Body of pancreas (tissue), 4 donors: ENCODE measurements at regions of chr1 and their contacts with region 1.

Region 1: DNA sequence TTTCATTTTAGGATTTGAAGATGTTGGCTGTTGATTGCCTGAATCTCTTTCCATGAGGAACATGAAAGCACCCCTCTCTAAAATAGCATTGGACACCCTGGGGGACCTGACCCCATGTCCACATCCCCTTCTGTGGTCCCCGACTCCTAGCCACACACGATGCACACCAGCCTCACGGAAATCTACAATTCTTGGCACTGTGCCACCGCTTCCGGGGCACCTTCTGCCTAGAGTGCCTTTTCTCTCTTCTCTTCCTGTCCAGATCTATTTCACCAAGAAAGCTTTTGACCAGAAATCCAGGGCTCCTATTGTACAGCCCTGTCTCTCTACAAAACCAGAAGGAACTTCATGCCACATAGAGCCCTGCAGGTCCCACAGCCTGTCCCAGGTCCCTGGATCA is 50.3 kb downstream of the MYSM1 start:
- DNase-seq: peak; percentile 34 to 63 (median 56)
- ATAC-seq: peak; percentile 42
- H3K4me3 ChIP-seq: no peak overlapping the region
- H3K27ac ChIP-seq: no peak overlapping the region
- H3K4me1 ChIP-seq: peaks cover 6% of the 10 kb centered on the region
- H3K27me3 ChIP-seq: no peaks in the 10 kb centered on the region
- CTCF ChIP-seq: no peak
- POLR2A ChIP-seq: no peak

Region 2: DNA sequence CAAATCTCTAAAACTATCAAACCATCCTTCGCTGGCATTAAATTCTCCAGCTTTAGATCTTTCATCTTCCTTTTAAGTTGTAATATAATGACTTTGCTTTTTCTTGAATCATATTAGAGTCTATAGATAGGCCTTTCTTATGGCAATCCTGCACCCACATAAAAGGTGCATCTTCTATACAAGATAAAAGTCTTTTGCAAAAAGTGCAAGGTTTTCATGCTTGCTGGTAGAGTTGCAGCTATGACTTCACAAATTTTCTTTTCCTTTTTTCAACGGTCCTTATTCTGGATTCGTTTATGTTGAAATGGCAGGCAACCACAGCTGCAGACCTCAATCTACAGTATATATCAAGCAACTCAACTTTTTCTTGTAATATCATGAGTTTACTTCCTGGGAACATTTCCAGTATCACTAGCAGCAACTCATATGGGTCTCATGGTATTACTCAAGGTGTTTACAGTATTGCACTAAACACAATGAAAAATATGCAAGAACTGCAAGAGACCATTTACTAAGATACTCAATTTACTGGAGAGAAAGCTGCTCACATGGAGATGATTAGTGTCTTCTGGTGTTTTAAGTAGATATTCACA is 125.1 kb before region 1 on chr1:
- intact Hi-C with region 1: loop called (anchors 5 kb)
- DNase-seq: no peak
- ATAC-seq: no peak
- H3K4me3 ChIP-seq: no peak overlapping the region
- H3K27ac ChIP-seq: no peak overlapping the region
- H3K4me1 ChIP-seq: peaks cover 9% of the 10 kb centered on the region
- H3K27me3 ChIP-seq: no peaks in the 10 kb centered on the region
- CTCF ChIP-seq: no peak
- POLR2A ChIP-seq: no peak

Region 3: GRCh38 chr1:58584082-58584895 is 65.3 kb before region 1 on chr1:
- intact Hi-C with region 1: no loop called
- DNase-seq: peak; percentile 48 to 72 (median 59)
- ATAC-seq: peak; percentile 88
- H3K4me3 ChIP-seq: no peak overlapping the region
- H3K27ac ChIP-seq: peak overlapping the region; percentile 50 to 70 (median 62)
- H3K4me1 ChIP-seq: peaks cover 24% of the 10 kb centered on the region
- H3K27me3 ChIP-seq: no peaks in the 10 kb centered on the region
- CTCF ChIP-seq: no peak
- POLR2A ChIP-seq: no peak

Region 4: GRCh38 chr1:58607391-58607790 is 42.2 kb before region 1 on chr1:
- intact Hi-C with region 1: no loop called
- DNase-seq: no peak
- ATAC-seq: no peak
- H3K4me3 ChIP-seq: no peak overlapping the region
- H3K27ac ChIP-seq: no peak overlapping the region
- H3K4me1 ChIP-seq: peaks cover 10% of the 10 kb centered on the region
- H3K27me3 ChIP-seq: no peaks in the 10 kb centered on the region
- CTCF ChIP-seq: no peak
- POLR2A ChIP-seq: no peak

Region 5: DNA sequence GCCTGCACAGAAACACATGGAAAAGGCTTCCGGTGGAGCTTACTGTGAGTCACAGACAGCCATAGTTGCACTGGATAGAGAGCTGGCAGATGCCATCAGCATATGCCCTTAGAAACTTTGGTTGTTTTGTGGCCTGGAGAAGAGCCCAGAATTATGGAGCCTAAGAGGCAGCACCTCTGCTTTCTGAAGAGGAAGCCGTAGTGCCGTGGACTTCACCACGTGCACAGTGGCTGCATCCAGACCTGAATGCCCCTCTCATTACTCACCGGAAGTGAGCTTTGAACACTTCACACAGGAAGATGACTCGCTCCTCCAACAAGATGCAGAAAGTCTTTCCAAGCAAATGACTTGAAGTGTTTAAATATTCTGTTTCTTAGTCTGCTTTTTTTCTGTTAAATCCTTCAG is 105.9 kb after region 1 on chr1:
- intact Hi-C with region 1: no loop called
- DNase-seq: peak in 3 of 4 donors; percentile 32 to 60 (median 47)
- ATAC-seq: peak; percentile 16
- H3K4me3 ChIP-seq: no peak overlapping the region
- H3K27ac ChIP-seq: peak overlapping the region in 1 of 4 donors; percentile 42
- H3K4me1 ChIP-seq: peaks cover 33% of the 10 kb centered on the region
- H3K27me3 ChIP-seq: no peaks in the 10 kb centered on the region
- CTCF ChIP-seq: no peak
- POLR2A ChIP-seq: no peak